Caco-2 (cell line): ENCODE measurements at regions of chr7 and their contacts with region 1.

Region 1: GRCh38 chr7:15764851-15765382 is 78.4 kb upstream of the MEOX2 start:
- DNase-seq: peak; percentile 76 to 80
- H3K4me3 ChIP-seq: no peak overlapping the region
- H3K4me3 Mint-ChIP-seq: no peak overlapping the region
- H3K27ac Mint-ChIP-seq: peak overlapping the region; percentile 90
- H3K4me1 ChIP-seq: peaks cover 40% of the 10 kb centered on the region
- H3K4me1 Mint-ChIP-seq: peaks cover 21% of the 10 kb centered on the region
- H3K27me3 ChIP-seq: no peaks in the 10 kb centered on the region
- H3K27me3 Mint-ChIP-seq: no peaks in the 10 kb centered on the region
- CTCF ChIP-seq: no peak

Region 2: DNA sequence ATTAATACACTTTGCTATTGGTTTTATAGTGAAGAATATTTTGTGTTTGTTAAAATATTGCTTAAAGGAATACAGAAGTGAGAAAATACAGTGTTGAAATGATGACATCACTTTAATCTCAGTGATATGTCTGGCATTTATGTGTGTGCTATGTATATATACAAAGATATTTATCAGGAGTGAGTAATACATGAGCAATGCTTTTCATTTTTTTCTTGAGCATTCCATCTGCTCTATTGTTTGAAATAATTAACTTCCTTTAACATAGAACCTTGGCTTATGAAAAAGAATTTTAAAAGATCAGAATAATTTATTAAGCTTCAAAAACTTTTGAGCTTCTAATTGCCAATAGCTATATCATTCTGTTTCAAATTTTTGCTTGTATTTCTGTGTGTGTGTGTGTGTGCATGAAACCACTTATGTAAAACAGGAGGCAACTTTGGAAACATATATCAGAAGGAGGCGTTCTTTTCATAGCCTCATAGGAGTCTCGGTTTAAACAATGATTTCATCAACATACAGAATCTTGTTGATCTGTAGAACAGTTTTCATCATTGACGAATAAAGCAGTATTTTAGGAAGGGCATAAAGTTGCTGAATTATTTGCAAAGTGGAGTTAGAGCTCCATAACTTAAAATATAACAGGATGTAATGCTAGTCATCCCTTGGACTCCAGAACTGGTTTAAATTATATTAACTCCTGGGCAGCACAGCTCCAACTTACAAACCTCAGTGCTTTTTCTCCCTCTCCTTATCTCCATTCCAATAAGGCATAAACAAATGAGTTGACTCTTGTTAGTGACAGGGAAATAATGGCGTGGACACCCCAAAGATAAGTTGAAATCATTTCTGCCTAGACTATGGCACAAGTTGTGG is 634.0 kb before region 1 on chr7:
- CTCF ChIA-PET with region 1: no interaction called
- POLR2A ChIA-PET with region 1: no interaction called
- intact Hi-C with region 1: no loop called
- DNase-seq: no peak
- H3K4me3 ChIP-seq: no peak overlapping the region
- H3K4me3 Mint-ChIP-seq: no peak overlapping the region
- H3K27ac Mint-ChIP-seq: peak overlapping the region; percentile 28
- H3K4me1 ChIP-seq: peaks cover 41% of the 10 kb centered on the region
- H3K4me1 Mint-ChIP-seq: peaks cover 16% of the 10 kb centered on the region
- H3K27me3 ChIP-seq: no peaks in the 10 kb centered on the region
- H3K27me3 Mint-ChIP-seq: no peaks in the 10 kb centered on the region
- CTCF ChIP-seq: no peak

Region 3: DNA sequence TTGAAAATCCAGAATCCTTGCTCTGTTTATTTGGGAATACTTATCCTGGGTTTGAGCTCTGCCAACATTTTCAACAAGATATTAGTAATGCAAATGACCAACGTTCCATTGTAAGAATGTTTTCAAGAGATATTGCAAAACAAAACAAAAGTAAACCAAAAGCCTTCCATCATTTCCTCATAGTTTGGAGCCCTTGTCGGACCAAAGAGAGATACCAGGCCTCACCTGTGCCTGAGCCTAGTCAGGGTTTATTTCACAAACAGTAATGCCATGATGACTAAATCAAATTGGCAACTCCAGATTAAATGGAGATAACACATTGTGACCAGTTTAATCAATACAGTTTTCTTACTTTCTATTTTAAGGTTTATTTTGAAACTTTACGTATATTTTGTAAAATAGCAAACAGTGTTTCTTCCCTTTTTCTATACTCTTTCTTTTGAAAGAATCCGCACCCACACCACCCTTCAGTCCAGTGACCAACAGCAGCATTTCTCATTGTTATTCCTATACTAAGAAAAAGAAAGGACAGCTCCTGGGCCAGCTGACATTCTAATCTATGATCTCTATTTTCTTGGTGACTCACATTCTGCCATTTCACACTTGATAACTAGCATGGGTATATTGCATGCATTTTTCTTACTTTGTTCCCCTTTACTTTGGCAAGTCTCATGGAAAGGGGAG is 90.1 kb after region 1 on chr7:
- CTCF ChIA-PET with region 1: no interaction called
- POLR2A ChIA-PET with region 1: no interaction called
- intact Hi-C with region 1: loop called (anchors 1 kb)
- DNase-seq: no peak
- H3K4me3 ChIP-seq: no peak overlapping the region
- H3K4me3 Mint-ChIP-seq: peak overlapping the region; percentile 45
- H3K27ac Mint-ChIP-seq: peak overlapping the region; percentile 74
- H3K4me1 ChIP-seq: peaks cover 30% of the 10 kb centered on the region
- H3K4me1 Mint-ChIP-seq: peaks cover 43% of the 10 kb centered on the region
- H3K27me3 ChIP-seq: no peaks in the 10 kb centered on the region
- H3K27me3 Mint-ChIP-seq: no peaks in the 10 kb centered on the region
- CTCF ChIP-seq: no peak

Region 4: GRCh38 chr7:16543456-16543855 is 778.5 kb after region 1 on chr7:
- CTCF ChIA-PET with region 1: no interaction called
- POLR2A ChIA-PET with region 1: no interaction called
- intact Hi-C with region 1: loop called (anchors 1 kb)
- DNase-seq: no peak
- H3K4me3 ChIP-seq: no peak overlapping the region
- H3K4me3 Mint-ChIP-seq: no peak overlapping the region
- H3K27ac Mint-ChIP-seq: peak overlapping the region; percentile 85
- H3K4me1 ChIP-seq: peaks cover 38% of the 10 kb centered on the region
- H3K4me1 Mint-ChIP-seq: peaks cover 31% of the 10 kb centered on the region
- H3K27me3 ChIP-seq: no peaks in the 10 kb centered on the region
- H3K27me3 Mint-ChIP-seq: no peaks in the 10 kb centered on the region
- CTCF ChIP-seq: no peak

Region 5: GRCh38 chr7:16604054-16604453 is 839.1 kb after region 1 on chr7:
- CTCF ChIA-PET with region 1: no interaction called
- POLR2A ChIA-PET with region 1: no interaction called
- intact Hi-C with region 1: loop called (anchors 5 kb)
- DNase-seq: no peak
- H3K4me3 ChIP-seq: no peak overlapping the region
- H3K4me3 Mint-ChIP-seq: no peak overlapping the region
- H3K27ac Mint-ChIP-seq: no peak overlapping the region
- H3K4me1 ChIP-seq: peaks cover 8% of the 10 kb centered on the region
- H3K4me1 Mint-ChIP-seq: peaks cover 12% of the 10 kb centered on the region
- H3K27me3 ChIP-seq: no peaks in the 10 kb centered on the region
- H3K27me3 Mint-ChIP-seq: no peaks in the 10 kb centered on the region
- CTCF ChIP-seq: peak in 1 of 2 experiments; percentile 8